ENCODE measurements at regions of chr11 and their contacts with region 1.

Region 1: GRCh38 chr11:102914238-102915043 is 39.7 kb upstream of the MMP12 start:
- DNase-seq: peak; percentile 54
- H3K4me3 Mint-ChIP-seq: no peak overlapping the region
- H3K27ac Mint-ChIP-seq: no peak overlapping the region
- H3K4me1 Mint-ChIP-seq: peaks cover 20% of the 10 kb centered on the region
- H3K27me3 Mint-ChIP-seq: no peaks in the 10 kb centered on the region
- CTCF ChIP-seq: peak; percentile 61

Region 2: GRCh38 chr11:102733232-102733875 is 181.1 kb before region 1 on chr11:
- CTCF ChIA-PET with region 1: interaction called, 11 read pairs
- POLR2A ChIA-PET with region 1: no interaction called
- intact Hi-C with region 1: loop called (anchors 10 kb)
- DNase-seq: peak; percentile 82
- H3K4me3 Mint-ChIP-seq: no peak overlapping the region
- H3K27ac Mint-ChIP-seq: no peak overlapping the region
- H3K4me1 Mint-ChIP-seq: peaks cover 5% of the 10 kb centered on the region
- H3K27me3 Mint-ChIP-seq: no peaks in the 10 kb centered on the region
- CTCF ChIP-seq: peak; percentile 86

Region 3: DNA sequence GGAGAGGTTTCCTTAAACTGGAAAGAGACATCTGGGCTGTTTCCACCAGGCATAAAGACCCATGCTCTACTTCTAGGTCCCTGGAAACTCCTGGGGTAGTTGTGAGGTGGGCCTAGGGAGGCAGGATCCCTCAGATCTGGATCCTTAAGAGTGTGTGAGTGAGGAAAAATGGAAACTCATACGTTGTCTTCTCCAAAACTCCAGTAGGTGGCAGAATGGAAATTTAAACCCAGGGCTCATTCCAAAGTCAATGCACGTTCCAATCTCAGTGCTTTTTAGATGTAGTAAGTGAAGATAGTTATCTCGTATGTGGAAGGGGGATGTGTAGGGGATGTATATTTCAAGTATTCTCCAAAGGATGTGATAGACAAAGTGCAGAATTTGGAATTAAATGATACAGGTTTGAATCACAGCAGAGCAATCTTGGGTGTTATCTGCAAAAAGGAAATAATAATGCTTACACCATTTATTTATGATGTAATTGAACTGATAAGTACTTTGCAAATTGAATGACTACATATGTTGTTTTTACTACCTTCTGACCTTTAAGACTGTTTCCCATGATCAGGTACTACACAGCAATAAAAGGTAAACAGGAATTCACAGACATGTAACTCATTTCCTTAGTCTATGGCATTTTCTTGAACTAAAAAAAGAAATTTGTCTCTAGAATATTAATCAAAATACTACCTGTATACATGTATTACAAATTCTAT is 103.3 kb before region 1 on chr11:
- CTCF ChIA-PET with region 1: interaction called, 15 read pairs
- POLR2A ChIA-PET with region 1: no interaction called
- intact Hi-C with region 1: no loop called
- DNase-seq: peak; percentile 55
- H3K4me3 Mint-ChIP-seq: no peak overlapping the region
- H3K27ac Mint-ChIP-seq: no peak overlapping the region
- H3K4me1 Mint-ChIP-seq: peaks cover 17% of the 10 kb centered on the region
- H3K27me3 Mint-ChIP-seq: no peaks in the 10 kb centered on the region
- CTCF ChIP-seq: peak; percentile 62

Region 4: DNA sequence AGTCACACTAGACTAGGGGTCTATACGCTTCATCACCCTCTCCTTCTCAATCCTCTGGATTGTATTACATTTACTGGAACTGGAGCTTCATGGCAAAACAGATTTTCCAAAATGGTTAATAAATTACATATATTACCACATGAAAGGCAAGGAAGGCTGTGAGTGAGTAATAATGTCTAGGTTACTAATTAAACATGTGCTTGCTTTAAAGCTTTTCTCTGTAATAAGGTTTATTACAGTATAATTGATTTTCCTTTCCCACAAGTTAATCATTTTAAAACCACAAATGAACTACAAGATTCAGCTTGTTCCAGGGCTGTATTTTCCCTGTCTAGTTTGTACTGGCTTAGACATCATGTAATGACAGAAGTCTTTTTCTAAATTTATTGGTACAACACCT is 15.5 kb after region 1 on chr11:
- CTCF ChIA-PET with region 1: interaction called, 35 read pairs
- POLR2A ChIA-PET with region 1: no interaction called
- intact Hi-C with region 1: no loop called
- DNase-seq: no peak
- H3K4me3 Mint-ChIP-seq: no peak overlapping the region
- H3K27ac Mint-ChIP-seq: no peak overlapping the region
- H3K4me1 Mint-ChIP-seq: no peaks in the 10 kb centered on the region
- H3K27me3 Mint-ChIP-seq: no peaks in the 10 kb centered on the region
- CTCF ChIP-seq: no peak

Region 5: DNA sequence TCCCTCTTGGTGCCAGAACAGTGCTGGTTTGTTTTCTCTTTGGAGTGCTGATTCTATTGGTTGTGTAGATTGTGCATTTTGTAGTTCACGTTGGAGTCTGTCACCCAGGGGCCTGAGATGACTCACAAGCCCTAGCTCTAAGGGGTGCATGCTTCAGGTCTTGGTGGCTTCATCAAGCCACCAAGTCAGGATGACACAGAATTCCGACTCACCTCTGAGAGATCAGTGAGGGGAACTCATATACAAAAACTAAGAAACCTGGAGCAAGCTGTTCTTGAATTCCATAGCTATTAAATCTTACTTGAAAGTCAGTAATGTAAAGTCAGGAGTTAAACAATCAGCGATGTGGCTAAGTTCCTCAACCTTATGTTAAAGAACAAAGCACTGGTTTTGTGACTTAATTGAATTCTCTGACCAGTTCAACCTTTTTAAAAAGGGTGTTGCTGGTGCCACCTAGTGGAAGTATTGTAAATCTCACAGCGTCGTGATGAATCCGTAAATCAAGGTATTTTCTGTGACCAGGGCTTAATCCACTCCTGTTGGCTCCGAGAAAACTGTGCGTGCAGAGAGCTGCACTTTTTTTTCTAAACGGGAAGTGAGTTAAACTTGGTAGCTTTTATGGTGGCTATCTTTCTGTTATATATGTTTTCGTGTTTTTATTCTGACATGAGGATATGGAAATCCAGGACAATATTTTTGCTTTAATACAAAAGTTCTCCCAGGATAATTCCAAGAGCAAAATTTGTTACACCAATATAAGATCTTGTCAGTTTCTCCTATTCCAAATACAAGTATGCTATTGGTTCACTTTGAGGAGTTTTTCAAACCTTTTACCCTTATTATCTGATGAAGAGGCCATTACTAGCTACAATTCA is 26.5 kb after region 1 on chr11:
- CTCF ChIA-PET with region 1: interaction called, 71 read pairs
- POLR2A ChIA-PET with region 1: interaction called, 11 read pairs
- intact Hi-C with region 1: loop called (anchors 2 kb)
- DNase-seq: peak; percentile 80
- H3K4me3 Mint-ChIP-seq: no peak overlapping the region
- H3K27ac Mint-ChIP-seq: no peak overlapping the region
- H3K4me1 Mint-ChIP-seq: no peaks in the 10 kb centered on the region
- H3K27me3 Mint-ChIP-seq: no peaks in the 10 kb centered on the region
- CTCF ChIP-seq: peak; percentile 75

Region 6: DNA sequence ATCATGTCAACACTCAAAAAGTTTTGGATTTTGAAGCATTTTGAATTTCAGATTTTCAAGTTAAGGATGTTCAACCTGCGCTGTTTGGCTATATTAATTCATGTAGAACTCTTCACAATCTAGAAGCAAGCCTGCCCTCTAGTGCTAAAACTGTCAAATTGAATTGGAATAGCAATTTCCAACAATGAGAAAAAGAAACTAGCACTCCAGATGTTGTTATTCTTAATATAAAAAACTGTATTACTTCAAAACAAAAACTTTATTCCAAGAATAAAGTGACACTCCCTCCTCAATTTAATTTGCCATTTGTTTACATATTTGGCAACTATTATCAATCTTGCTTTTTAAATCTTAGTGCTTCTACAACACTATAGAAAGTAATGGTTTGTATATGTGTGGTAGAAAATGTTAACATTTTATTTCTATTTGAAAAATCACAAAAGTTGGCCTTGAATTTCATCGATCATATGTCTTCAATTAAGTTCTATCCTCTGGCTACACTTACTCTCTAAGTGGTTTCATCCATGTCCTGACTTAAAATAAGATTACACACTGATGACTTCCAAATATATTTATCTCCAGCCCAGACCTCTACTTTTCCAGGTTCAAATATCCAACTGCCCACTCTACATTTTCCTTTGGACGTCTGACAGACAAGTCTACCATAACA is 140.9 kb after region 1 on chr11:
- CTCF ChIA-PET with region 1: interaction called, 9 read pairs
- POLR2A ChIA-PET with region 1: no interaction called
- intact Hi-C with region 1: loop called (anchors 2 kb)
- DNase-seq: peak; percentile 42
- H3K4me3 Mint-ChIP-seq: no peak overlapping the region
- H3K27ac Mint-ChIP-seq: no peak overlapping the region
- H3K4me1 Mint-ChIP-seq: no peaks in the 10 kb centered on the region
- H3K27me3 Mint-ChIP-seq: no peaks in the 10 kb centered on the region
- CTCF ChIP-seq: peak; percentile 36